ENCODE measurements at regions of chr21 and their contacts with region 1.

Region 1: GRCh38 chr21:16534408-16535101 is 804.8 kb downstream of the USP25 start:
- DNase-seq: peak; percentile 35
- H3K4me3 ChIP-seq: peak overlapping the region; percentile 31 to 85 (median 43)
- H3K27ac ChIP-seq: no peak overlapping the region
- H3K4me1 ChIP-seq: peaks cover 3% of the 10 kb centered on the region
- H3K27me3 ChIP-seq: no peaks in the 10 kb centered on the region
- CTCF ChIP-seq: no peak

Region 2: GRCh38 chr21:16308269-16308668 is 226.3 kb before region 1 on chr21:
- CTCF ChIA-PET with region 1: no interaction called
- dilution Hi-C with region 1: no loop called
- in situ Hi-C with region 1: no loop called
- intact Hi-C with region 1: loop called (anchors 5 kb)
- DNase-seq: peak; percentile 90
- H3K4me3 ChIP-seq: peak overlapping the region; percentile 28 to 64 (median 43)
- H3K27ac ChIP-seq: peak overlapping the region; percentile 50
- H3K4me1 ChIP-seq: no peaks in the 10 kb centered on the region
- H3K27me3 ChIP-seq: no peaks in the 10 kb centered on the region
- CTCF ChIP-seq: no peak

Region 3: DNA sequence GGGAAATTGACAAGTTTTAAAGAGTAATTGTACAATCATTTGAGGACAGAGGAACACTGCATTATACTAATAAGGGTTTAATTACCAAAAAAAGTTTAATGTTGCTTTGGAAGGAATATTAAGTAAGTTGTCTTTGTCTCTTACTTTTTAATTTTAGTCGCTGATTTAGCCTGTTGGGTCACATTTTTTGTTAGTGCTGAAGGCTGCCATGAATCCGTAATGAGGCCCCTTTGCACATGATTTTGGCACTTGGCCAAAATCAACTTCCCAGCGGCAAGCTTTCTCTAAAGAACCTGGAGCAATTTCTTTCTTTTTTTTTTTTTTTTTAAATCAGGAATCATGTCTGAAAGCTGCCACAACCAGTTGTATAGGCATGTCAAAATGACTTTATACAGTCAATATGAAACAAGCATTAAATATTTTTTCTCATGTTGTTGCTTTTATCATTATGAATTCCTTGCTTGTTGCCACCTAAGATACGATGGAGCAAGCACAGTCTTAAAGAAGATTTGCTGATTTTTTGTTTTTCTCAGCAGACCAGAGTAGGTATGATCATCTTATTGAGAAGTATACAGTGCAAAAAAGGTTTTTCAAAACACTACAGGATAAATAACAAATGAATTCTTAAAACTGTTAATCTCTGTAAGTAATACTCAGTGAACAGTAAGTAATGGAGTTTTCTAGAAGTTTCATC is 114.4 kb before region 1 on chr21:
- CTCF ChIA-PET with region 1: no interaction called
- dilution Hi-C with region 1: no loop called
- in situ Hi-C with region 1: no loop called
- intact Hi-C with region 1: loop called (anchors 1 kb)
- DNase-seq: peak; percentile 62
- H3K4me3 ChIP-seq: peak overlapping the region; percentile 37 to 57 (median 49)
- H3K27ac ChIP-seq: peak overlapping the region; percentile 47
- H3K4me1 ChIP-seq: peaks cover 5% of the 10 kb centered on the region
- H3K27me3 ChIP-seq: no peaks in the 10 kb centered on the region
- CTCF ChIP-seq: no peak

Region 4: GRCh38 chr21:16573578-16573977 is 39.0 kb after region 1 on chr21:
- CTCF ChIA-PET with region 1: no interaction called
- dilution Hi-C with region 1: no loop called
- in situ Hi-C with region 1: no loop called
- intact Hi-C with region 1: loop called (anchors 5 kb)
- DNase-seq: no peak
- H3K4me3 ChIP-seq: no peak overlapping the region
- H3K27ac ChIP-seq: no peak overlapping the region
- H3K4me1 ChIP-seq: peaks cover 14% of the 10 kb centered on the region
- H3K27me3 ChIP-seq: no peaks in the 10 kb centered on the region
- CTCF ChIP-seq: no peak

Region 5: DNA sequence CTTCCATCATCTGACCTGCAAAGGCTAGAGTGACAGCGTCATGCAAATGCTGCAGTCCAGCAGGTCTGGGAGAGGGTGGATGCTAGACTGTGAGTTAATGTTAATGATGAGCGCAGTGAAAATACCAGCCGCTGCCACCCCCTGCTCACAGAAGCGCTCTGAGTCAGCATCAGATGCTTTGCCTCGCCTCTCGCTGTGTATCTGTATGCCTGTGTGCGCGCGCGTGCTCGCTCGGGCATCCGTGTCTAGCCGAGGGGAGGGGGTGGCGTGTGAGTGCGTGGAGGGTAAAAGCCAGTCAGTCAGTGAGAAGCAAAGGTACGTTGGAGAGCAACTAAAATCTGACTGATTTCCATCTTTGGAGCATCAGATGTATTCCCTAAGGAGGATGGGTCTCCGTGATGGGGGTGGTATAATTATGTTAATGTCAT is 53.9 kb after region 1 on chr21:
- CTCF ChIA-PET with region 1: no interaction called
- dilution Hi-C with region 1: no loop called
- in situ Hi-C with region 1: loop called in 1 of 2 experiments (anchors 5 kb)
- intact Hi-C with region 1: loop called (anchors 1 kb)
- DNase-seq: peak; percentile 85
- H3K4me3 ChIP-seq: peak overlapping the region; percentile 44 to 49 (median 48)
- H3K27ac ChIP-seq: peak overlapping the region; percentile 91
- H3K4me1 ChIP-seq: peaks cover 23% of the 10 kb centered on the region
- H3K27me3 ChIP-seq: no peaks in the 10 kb centered on the region
- CTCF ChIP-seq: no peak

Measured in mammary epithelial cell (primary cell).